Common myeloid progenitor, CD34-positive (primary cell): ENCODE measurements at regions of chr6 and their contacts with region 1.

Region 1: GRCh38 chr6:166441325-166442078 is 58.8 kb upstream of the MPC1 start:
- DNase-seq: peak in 2 of 3 donors; percentile 85 to 89
- H3K4me3 ChIP-seq: peak overlapping the region in 2 of 7 experiments; percentile 24 to 31
- H3K27ac ChIP-seq: no peak overlapping the region
- H3K4me1 ChIP-seq: peaks cover 16 to 61% (median 57%) of the 10 kb centered on the region in 4 experiments
- H3K27me3 ChIP-seq: no peaks in the 10 kb centered on the region

Region 2: DNA sequence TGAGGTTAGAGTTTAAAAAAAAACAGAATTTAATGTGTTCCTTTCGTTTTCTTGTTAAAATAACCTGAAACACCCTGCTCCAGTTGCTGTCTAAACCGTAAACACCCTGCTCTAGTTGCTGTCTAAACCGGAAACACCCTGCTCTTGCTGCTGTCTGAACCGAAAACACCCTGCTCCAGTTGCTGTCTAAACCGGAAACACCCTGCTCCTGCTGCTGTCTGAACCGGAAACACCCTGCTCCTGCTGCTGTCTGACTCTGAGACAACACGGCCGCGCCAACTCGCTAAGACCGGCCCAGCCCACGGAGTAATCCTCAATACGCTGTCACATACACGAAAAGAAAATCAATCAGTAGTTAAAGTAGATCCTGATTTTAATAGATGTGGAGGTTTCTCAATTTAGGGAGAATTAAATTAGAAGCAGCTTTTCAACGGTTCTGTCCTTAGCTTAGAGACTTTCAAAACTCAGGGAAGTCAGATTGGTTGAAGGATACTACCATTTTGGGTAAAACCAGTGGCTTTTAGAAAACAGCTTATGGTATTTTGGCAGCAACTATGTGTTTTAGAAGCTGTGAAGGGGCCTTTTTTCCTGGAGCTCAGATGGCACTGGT is 46.7 kb after region 1 on chr6:
- CTCF ChIA-PET with region 1: interaction called, 13 read pairs
- POLR2A ChIA-PET with region 1: no interaction called
- DNase-seq: peak; percentile 92 to 100 (median 99)
- H3K4me3 ChIP-seq: peak overlapping the region in 4 of 7 experiments; percentile 14 to 53 (median 44)
- H3K27ac ChIP-seq: peak overlapping the region; percentile 14 to 59
- H3K4me1 ChIP-seq: peaks cover 1 to 23% (median 16%) of the 10 kb centered on the region in 4 experiments
- H3K27me3 ChIP-seq: no peaks in the 10 kb centered on the region